IMR-90 (cell line): ENCODE measurements at regions of chr19 and their contacts with region 1.

Region 1: DNA sequence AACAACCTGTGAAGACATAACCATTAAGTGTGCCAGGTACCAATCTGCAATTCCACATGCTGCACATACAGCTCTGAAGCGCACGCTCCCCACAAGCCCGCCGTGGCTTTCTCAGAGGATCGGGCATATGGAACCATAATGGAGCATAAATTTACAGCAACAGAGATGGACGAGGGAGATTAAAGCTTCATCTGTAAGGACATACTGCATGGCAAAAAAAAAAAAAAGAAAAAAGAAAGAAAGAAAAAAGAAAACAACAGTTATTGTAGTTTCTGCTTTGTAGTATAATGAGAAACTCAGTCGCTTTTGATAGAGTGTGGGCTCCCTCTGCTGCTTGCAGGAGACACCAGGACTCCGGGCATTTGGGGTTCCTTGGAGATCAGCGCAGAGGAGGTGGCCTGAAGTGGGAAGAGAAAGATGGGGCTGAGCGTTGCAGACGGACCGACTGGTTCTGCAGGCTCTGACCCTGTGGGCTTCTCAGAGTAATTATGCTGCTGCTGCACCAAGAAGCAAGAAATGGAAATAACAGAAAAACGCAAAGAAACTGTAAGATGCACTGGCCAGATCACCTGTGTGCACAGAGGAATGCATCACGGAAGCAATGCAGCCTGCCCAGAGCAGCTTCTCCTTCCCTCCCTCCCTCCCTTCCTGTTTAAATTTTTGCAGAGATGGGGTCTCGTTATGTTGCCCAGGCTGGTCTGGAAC is 10.8 kb upstream of the PDCD5 start:
- DNase-seq: peak; percentile 57
- ATAC-seq: peak; percentile 95
- H3K4me3 ChIP-seq: no peak overlapping the region
- H3K27ac ChIP-seq: no peak overlapping the region
- H3K4me1 ChIP-seq: no peaks in the 10 kb centered on the region
- H3K27me3 ChIP-seq: 0 out of 2 replicates have a peak, but pooled peaks cover 2% of the 10 kb centered on the region
- CTCF ChIP-seq: peak; percentile 77
- POLR2A ChIP-seq: no peak
- RAD21 ChIP-seq: peak; percentile 84

Region 2: DNA sequence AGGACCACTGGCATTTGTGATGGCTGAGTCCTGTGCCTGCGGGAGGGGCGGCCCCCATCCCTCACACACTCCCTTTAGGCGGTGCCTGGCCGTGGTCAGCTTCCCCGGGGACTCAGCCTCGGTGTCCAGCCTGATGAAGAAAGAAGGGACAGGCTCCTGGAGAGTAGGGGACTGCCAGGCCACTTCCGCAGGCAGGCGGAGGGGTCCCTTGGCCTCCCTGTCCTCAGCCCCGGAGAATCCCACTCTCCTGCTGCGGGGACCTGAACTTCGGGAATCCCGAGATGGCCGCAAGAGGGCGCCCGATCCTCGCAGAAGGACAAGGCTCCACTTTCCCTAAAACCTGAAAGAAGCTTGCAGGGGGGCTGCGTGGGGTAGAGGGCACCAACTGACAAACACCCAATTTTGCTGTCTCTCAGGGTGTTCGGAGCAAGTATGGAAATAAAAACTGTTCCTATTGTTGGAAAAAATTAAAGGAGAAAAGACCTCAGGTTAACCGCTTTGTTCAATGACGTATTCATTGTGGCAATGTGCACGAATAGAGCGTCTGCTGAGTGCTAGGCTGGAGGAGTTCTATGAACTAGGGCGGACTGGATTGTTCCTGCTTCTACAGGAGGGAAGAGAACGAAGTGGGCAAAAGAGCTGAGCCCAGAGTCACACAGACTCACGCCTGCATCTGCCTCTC is 1900.8 kb before region 1 on chr19:
- CTCF ChIA-PET with region 1: no interaction called
- POLR2A ChIA-PET with region 1: no interaction called
- dilution Hi-C with region 1: no loop called
- in situ Hi-C with region 1: loop called (anchors 25 kb)
- intact Hi-C with region 1: loop called (anchors 2 kb)
- DNase-seq: peak; percentile 12
- ATAC-seq: peak; percentile 72
- H3K4me3 ChIP-seq: no peak overlapping the region
- H3K27ac ChIP-seq: no peak overlapping the region
- H3K4me1 ChIP-seq: no peaks in the 10 kb centered on the region
- H3K27me3 ChIP-seq: no peaks in the 10 kb centered on the region; the same call in 1 of the 2 replicates
- CTCF ChIP-seq: peak; percentile 64
- POLR2A ChIP-seq: no peak
- RAD21 ChIP-seq: peak; percentile 57

Region 3: GRCh38 chr19:30682999-30683536 is 1887.2 kb before region 1 on chr19:
- CTCF ChIA-PET with region 1: no interaction called
- POLR2A ChIA-PET with region 1: no interaction called
- dilution Hi-C with region 1: no loop called
- in situ Hi-C with region 1: no loop called
- intact Hi-C with region 1: loop called (anchors 5 kb)
- DNase-seq: peak; percentile 82
- ATAC-seq: peak; percentile 97
- H3K4me3 ChIP-seq: no peak overlapping the region
- H3K27ac ChIP-seq: no peak overlapping the region
- H3K4me1 ChIP-seq: no peaks in the 10 kb centered on the region
- H3K27me3 ChIP-seq: peaks cover 11% of the 10 kb centered on the region
- CTCF ChIP-seq: peak; percentile 97
- POLR2A ChIP-seq: no peak; the same call in 1 of the 2 replicates
- RAD21 ChIP-seq: peak; percentile 90

Region 4: DNA sequence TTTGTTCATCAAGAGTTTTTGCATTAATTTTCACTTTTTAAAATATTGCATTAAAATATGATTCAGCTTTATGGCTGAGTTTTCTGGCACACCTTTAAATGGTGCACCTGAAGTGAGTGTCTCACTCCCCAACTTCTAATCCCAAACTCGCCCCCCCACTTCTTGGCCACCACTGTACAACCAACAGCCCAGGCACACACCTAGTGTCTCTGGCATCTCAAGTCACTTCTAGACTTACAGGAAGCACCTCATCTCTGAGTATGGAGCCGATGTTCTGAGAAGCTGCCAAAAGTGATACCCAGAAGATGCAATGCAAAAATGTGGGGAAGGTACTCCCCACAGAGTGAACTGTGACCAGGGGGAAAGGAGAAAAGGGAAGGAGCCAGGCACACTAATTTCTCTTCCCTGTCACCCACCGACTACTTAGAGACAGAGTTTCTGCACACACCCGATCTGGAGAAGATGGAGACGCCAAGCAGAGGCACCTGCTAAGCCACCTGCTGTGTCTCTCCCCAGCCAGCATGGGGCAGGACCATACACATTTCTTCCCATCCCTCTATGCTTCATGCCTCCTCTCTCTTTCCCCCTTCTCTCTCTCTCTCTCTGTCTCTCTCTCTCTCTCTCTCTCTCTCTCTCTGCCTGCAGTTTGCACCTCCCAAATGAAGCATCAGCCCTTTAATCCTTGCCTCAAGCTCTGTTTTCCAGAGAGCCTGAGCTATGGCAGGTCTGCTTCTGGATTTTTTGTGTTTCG is 380.1 kb before region 1 on chr19:
- CTCF ChIA-PET with region 1: no interaction called
- POLR2A ChIA-PET with region 1: no interaction called
- dilution Hi-C with region 1: no loop called
- in situ Hi-C with region 1: no loop called
- intact Hi-C with region 1: no loop called
- DNase-seq: no peak
- ATAC-seq: no peak
- H3K4me3 ChIP-seq: no peak overlapping the region
- H3K27ac ChIP-seq: no peak overlapping the region
- H3K4me1 ChIP-seq: no peaks in the 10 kb centered on the region
- H3K27me3 ChIP-seq: no peaks in the 10 kb centered on the region
- CTCF ChIP-seq: no peak
- POLR2A ChIP-seq: no peak
- RAD21 ChIP-seq: no peak

Region 5: GRCh38 chr19:32287811-32288227 is 282.4 kb before region 1 on chr19:
- CTCF ChIA-PET with region 1: interaction called, 3 read pairs
- POLR2A ChIA-PET with region 1: no interaction called
- dilution Hi-C with region 1: no loop called
- in situ Hi-C with region 1: loop called (anchors 10 kb)
- intact Hi-C with region 1: loop called (anchors 1 kb)
- DNase-seq: peak; percentile 61
- ATAC-seq: peak; percentile 92
- H3K4me3 ChIP-seq: no peak overlapping the region
- H3K27ac ChIP-seq: no peak overlapping the region
- H3K4me1 ChIP-seq: no peaks in the 10 kb centered on the region
- H3K27me3 ChIP-seq: no peaks in the 10 kb centered on the region
- CTCF ChIP-seq: peak; percentile 62
- POLR2A ChIP-seq: no peak
- RAD21 ChIP-seq: peak; percentile 69

Region 6: GRCh38 chr19:32339988-32340874 is 230.0 kb before region 1 on chr19:
- CTCF ChIA-PET with region 1: interaction called, 3 read pairs
- POLR2A ChIA-PET with region 1: no interaction called
- dilution Hi-C with region 1: no loop called
- in situ Hi-C with region 1: no loop called
- intact Hi-C with region 1: loop called (anchors 1 kb)
- DNase-seq: peak; percentile 27
- ATAC-seq: peak; percentile 87
- H3K4me3 ChIP-seq: no peak overlapping the region
- H3K27ac ChIP-seq: no peak overlapping the region
- H3K4me1 ChIP-seq: peaks cover 3% of the 10 kb centered on the region; the same call in 1 of the 2 replicates
- H3K27me3 ChIP-seq: no peaks in the 10 kb centered on the region
- CTCF ChIP-seq: peak; percentile 60
- POLR2A ChIP-seq: no peak
- RAD21 ChIP-seq: peak; percentile 56